ENCODE measurements at regions of chr17 and their contacts with region 1.

Region 1: GRCh38 chr17:5468075-5468473 is 708 bp downstream of the DHX33 start:
- DNase-seq: no peak
- ATAC-seq: peak; percentile 10; the same call in 2 of the 3 replicates
- H3K4me3 ChIP-seq: peak overlapping the region; percentile 91 to 97 (median 96)
- H3K27ac ChIP-seq: peak overlapping the region; percentile 67
- H3K4me1 ChIP-seq: peaks cover 38% of the 10 kb centered on the region
- H3K27me3 ChIP-seq: no peaks in the 10 kb centered on the region; a peak in 1 of 5 replicates
- CTCF ChIP-seq: no peak
- EP300 ChIP-seq: no peak
- POLR2A ChIP-seq: no peak
- RAD21 ChIP-seq: no peak

Region 2: DNA sequence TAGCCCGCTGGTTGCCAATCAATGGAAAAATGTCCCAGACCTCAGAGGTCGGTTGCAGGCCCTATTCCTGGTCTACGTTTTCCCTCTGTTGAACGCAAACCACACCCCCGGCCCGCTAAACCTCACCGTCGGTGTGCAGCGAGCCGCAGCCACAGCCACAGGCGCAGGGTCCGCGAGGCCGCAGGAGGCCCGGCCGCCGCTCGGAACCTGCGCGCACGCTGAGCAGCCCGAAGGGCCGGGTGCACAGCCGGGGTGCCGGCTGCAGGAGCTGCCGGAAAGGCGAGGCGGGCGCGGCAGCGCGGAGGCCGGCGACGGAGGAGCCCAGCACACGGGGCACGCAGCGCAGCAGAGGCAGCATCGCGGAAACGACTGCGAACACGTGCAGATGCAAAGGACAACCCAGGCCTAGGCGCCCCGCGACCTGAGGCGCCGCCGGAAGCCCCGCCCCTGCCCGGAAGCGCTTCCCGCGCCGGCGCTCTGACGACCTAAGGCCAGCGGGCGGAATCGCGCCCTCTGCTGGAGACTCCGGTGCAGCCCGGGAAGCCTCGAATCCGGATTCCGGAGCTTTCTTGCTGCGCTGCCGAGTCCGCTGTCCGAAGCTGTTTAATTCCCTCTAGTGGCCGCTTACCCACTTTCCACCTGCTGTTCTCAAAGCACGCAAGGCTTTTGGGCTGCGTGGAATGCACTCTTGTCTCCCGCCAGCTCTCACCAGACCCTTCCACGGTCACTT is 29.2 kb before region 1 on chr17 and contains the start of gene C1QBP:
- CTCF ChIA-PET with region 1: interaction called, 3 read pairs
- POLR2A ChIA-PET with region 1: interaction called, 15 read pairs
- in situ Hi-C with region 1: no loop called
- intact Hi-C with region 1: loop called (anchors 2 kb)
- DNase-seq: peak; percentile 85
- ATAC-seq: peak; percentile 90
- H3K4me3 ChIP-seq: peak within 1 kb of the TSS; percentile 74 to 90 (median 84)
- H3K27ac ChIP-seq: peak within 1 kb of the TSS; percentile 84
- H3K4me1 ChIP-seq: peaks cover 29% of the 10 kb centered on the region
- H3K27me3 ChIP-seq: no peaks in the 10 kb centered on the region; a peak in 1 of 5 replicates
- CTCF ChIP-seq: peak; percentile 95
- EP300 ChIP-seq: 0 out of 4 replicates have a peak, but pooled peaks of 1 of the 2 experiments have one; percentile 19
- POLR2A ChIP-seq: peak; percentile 84 to 93
- RAD21 ChIP-seq: peak; percentile 94
- total RNA-seq, gene C1QBP: 631 and 680 TPM in 2 replicates

Region 3: DNA sequence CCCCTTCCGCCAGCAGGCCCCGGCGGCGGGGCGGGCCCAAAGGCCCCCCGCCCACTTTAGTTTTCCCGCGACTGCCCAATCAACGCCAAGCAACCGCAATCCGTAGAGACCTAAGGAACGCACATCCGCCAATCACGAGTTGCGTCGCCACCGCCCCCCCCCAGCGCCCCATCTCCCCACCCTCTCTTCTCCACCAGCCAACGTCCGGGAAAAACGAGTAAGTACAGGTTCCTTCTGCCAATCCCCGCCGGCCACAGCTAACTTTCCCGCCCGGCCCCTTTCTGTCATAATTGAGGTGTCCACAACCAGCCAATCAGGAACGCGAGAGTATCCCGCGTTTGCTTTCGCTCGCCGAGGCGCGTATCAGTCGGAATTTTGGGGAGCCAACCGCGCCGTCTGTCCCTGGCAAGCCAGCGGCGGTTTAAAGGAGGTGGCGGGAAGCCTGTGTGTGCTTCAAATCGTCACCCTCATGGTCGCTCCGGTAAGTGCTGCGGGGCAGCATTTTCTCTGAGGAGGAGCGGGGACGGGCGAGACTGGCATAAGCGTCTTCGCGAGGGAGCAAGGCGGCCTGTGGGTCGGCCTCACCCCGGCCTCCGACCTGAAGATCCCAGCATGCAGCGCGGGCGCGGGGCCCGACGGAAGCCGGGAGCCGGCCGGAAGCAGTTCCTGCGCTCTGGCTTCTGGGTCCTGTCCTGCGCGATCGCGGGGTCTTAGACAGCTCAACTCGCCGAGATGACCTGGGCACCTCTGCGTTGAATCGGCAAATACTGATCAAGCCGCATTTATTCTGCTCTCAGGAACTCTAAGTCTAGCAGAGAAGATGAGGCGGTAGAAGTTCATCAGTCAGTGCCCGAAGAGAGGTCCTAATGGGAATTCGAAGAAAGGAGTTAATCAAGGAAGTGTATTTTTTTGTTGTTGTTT is 18.4 kb after region 1 on chr17 and contains the start of gene MIS12:
- CTCF ChIA-PET with region 1: no interaction called
- POLR2A ChIA-PET with region 1: interaction called, 51 read pairs
- in situ Hi-C with region 1: no loop called
- intact Hi-C with region 1: no loop called
- DNase-seq: peak; percentile 98
- ATAC-seq: peak; percentile 96
- H3K4me3 ChIP-seq: peak within 1 kb of the TSS; percentile 90 to 97 (median 95)
- H3K27ac ChIP-seq: peak within 1 kb of the TSS; percentile 100
- H3K4me1 ChIP-seq: peaks cover 30% of the 10 kb centered on the region
- H3K27me3 ChIP-seq: peaks cover 0 to 3% of the 10 kb centered on the region in 2 experiments; a peak in 1 of 5 replicates
- CTCF ChIP-seq: no peak
- EP300 ChIP-seq: 0 out of 4 replicates have a peak, but pooled peaks of 1 of the 2 experiments have one; percentile 22
- POLR2A ChIP-seq: peak; percentile 66 to 91
- RAD21 ChIP-seq: peak; percentile 38; the same call in 1 of the 2 replicates
- total RNA-seq, gene MIS12: 28.0 and 28.3 TPM in 2 replicates

Measured in HepG2 (cell line).